ENCODE measurements at regions of chr10 and their contacts with region 1.

Region 1: GRCh38 chr10:53298443-53298842 is 525.9 kb upstream of the MBL2 start:
- DNase-seq: no peak
- ATAC-seq: no peak
- H3K4me3 ChIP-seq: no peak overlapping the region
- H3K27ac ChIP-seq: no peak overlapping the region
- H3K4me1 ChIP-seq: no peaks in the 10 kb centered on the region
- H3K27me3 ChIP-seq: no peaks in the 10 kb centered on the region
- CTCF ChIP-seq: peak; percentile 9; the same call in 1 of the 2 replicates

Region 2: DNA sequence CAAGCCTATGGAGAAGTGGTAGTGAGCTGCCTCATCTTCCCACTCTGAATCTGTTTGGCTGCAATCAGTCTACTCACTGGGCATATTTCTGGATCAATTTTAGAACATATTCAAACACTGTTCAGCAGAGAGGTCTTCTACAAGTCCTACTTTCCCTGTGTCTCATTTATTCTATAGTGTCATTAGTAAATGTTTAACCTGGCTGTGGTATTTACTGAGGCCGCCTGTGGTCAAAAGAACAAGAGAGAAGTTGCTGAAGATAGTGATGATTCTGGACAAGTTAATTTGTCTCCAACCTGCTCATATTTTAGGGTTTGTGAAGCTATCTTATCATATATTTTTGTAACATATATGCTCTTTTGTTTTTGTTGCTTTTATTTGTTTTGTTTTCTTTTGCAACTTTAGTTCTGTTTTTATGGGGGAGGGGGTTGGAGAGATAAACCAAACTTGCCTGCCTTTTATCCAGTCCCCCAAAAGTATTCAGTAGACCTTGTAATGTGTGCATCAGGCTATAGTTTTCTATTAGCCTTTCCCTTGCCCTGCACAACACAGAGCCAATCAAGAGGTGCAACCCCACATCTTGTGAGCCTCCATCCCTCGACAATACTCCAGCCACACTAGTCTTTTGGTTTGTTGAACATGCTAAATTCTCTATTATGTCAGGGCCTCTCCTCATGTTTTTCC is 163.1 kb before region 1 on chr10:
- CTCF ChIA-PET with region 1: no interaction called
- POLR2A ChIA-PET with region 1: no interaction called
- in situ Hi-C with region 1: no loop called
- intact Hi-C with region 1: no loop called
- DNase-seq: no peak
- ATAC-seq: no peak
- H3K4me3 ChIP-seq: no peak overlapping the region
- H3K27ac ChIP-seq: no peak overlapping the region
- H3K4me1 ChIP-seq: no peaks in the 10 kb centered on the region
- H3K27me3 ChIP-seq: no peaks in the 10 kb centered on the region
- CTCF ChIP-seq: no peak

Region 3: GRCh38 chr10:53256623-53257022 is 41.8 kb before region 1 on chr10:
- CTCF ChIA-PET with region 1: no interaction called
- POLR2A ChIA-PET with region 1: no interaction called
- in situ Hi-C with region 1: no loop called
- intact Hi-C with region 1: no loop called
- DNase-seq: no peak
- ATAC-seq: no peak
- H3K4me3 ChIP-seq: no peak overlapping the region
- H3K27ac ChIP-seq: no peak overlapping the region
- H3K4me1 ChIP-seq: no peaks in the 10 kb centered on the region
- H3K27me3 ChIP-seq: no peaks in the 10 kb centered on the region
- CTCF ChIP-seq: no peak

Region 4: DNA sequence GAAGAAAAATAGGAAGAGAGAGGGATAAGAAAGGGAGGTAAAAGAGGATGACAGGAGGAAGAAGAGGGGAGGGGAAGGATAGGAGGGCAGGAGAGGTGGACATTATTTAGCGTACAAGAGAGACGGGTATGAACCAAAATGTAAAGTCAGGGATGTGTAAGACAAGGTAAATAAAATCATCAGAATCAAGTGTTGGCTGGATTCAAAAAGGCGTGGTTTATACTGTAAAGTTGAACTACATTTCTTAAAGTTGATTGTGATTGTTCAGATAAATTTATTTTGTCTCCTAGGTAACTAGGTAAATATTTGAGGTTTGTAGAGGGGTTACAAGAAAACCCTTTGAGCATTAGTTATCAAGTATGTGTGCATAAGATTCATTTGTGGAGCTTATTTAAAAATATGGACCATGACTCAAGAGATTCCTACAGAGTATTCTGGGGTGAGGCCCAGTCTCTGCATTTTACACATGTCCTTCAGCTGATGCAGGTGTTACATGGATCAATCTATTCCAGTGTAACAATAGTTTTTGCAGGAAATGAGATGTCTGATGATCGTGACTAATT is 13.7 kb before region 1 on chr10:
- CTCF ChIA-PET with region 1: no interaction called
- POLR2A ChIA-PET with region 1: interaction called, 10 read pairs
- in situ Hi-C with region 1: no loop called
- intact Hi-C with region 1: no loop called
- DNase-seq: no peak
- ATAC-seq: no peak
- H3K4me3 ChIP-seq: no peak overlapping the region
- H3K27ac ChIP-seq: no peak overlapping the region
- H3K4me1 ChIP-seq: no peaks in the 10 kb centered on the region
- H3K27me3 ChIP-seq: no peaks in the 10 kb centered on the region
- CTCF ChIP-seq: no peak

Region 5: GRCh38 chr10:53379956-53380355 is 81.5 kb after region 1 on chr10:
- CTCF ChIA-PET with region 1: interaction called, 14 read pairs
- POLR2A ChIA-PET with region 1: no interaction called
- in situ Hi-C with region 1: no loop called
- intact Hi-C with region 1: no loop called
- DNase-seq: no peak
- ATAC-seq: no peak
- H3K4me3 ChIP-seq: no peak overlapping the region
- H3K27ac ChIP-seq: no peak overlapping the region
- H3K4me1 ChIP-seq: no peaks in the 10 kb centered on the region
- H3K27me3 ChIP-seq: no peaks in the 10 kb centered on the region
- CTCF ChIP-seq: no peak